Activated CD4-positive, alpha-beta T cell treated with anti-CD3 and anti-CD28 coated beads for 36 hours (primary cell): ENCODE measurements at regions of chr9 and their contacts with region 1.

Region 1: GRCh38 chr9:120892748-120893610 is 16.0 kb upstream of the PHF19 start:
- DNase-seq: peak; percentile 78
- ATAC-seq: peak; percentile 46
- H3K4me3 Mint-ChIP-seq: peak overlapping the region; percentile 67
- H3K27ac Mint-ChIP-seq: peak overlapping the region; percentile 100
- H3K4me1 Mint-ChIP-seq: peaks cover 89% of the 10 kb centered on the region
- H3K27me3 Mint-ChIP-seq: no peaks in the 10 kb centered on the region

Region 2: DNA sequence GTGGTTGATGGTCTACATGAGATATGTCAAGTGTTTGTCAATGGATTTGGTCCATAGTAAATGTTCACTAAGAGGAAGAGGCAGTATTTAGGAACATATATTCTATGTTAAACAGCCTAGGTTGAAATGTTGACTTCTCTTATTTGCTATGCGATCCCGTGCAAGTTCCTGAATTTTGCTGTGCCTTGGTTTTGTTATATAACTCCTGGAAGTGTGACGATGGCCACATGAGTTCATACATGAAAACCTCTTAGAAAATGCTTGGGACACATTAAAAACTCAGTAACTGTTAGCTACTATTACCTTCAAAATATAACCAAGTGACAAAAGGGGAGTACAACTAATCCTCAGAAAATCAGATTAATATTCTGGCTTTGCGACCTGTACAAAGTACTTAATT is 77.9 kb before region 1 on chr9:
- CTCF ChIA-PET with region 1: no interaction called
- POLR2A ChIA-PET with region 1: no interaction called
- intact Hi-C with region 1: no loop called
- DNase-seq: no peak
- ATAC-seq: no peak
- H3K4me3 Mint-ChIP-seq: no peak overlapping the region
- H3K27ac Mint-ChIP-seq: no peak overlapping the region
- H3K4me1 Mint-ChIP-seq: peaks cover 6% of the 10 kb centered on the region
- H3K27me3 Mint-ChIP-seq: no peaks in the 10 kb centered on the region

Region 3: DNA sequence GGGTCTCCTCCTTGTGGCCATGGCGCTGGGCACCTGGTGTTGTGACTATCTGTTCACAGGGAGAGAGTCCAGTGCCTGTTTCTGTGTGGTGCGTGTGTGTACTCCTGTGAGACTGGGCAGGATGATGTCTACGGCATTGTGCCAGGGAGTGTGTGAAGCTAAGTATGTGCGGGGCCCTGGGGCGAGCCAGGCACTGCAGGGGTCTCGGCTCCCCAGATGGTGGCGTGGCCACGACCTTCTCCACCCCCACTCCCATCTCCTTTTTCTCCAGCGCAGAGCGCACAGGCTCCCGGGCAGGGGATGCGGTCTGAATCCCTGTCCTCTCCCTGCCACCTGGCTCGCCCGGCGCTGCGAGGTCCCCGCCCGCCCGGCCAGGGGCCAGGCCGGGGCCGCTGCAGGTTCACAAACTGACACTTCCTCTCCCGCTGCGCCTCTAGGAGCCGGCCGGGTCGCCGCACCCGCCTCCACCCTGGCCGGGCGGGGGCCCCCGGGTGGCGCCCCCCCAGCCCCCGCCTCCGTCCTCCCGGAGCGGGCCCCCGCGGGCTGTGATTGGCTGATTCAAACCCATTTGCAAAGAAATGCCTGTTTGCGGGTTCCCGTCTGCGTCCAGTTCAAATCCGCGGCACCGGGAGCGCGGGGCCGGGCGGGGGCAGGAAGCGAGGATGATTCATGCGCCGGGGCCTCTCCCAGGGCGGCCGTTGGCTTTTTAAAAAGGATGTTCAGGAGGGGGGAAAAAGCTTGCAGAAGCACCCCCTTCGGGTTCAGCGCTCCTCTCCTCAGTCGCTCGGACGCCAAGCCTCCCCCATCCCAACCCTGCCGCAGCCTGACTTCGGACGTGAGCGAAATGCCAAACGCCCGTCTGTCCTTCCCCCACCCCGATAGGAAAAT is 16.8 kb before region 1 on chr9:
- CTCF ChIA-PET with region 1: interaction called, 6 read pairs
- POLR2A ChIA-PET with region 1: interaction called, 21 read pairs
- intact Hi-C with region 1: loop called (anchors 1 kb)
- DNase-seq: peak; percentile 95
- ATAC-seq: peak; percentile 59
- H3K4me3 Mint-ChIP-seq: peak overlapping the region; percentile 85
- H3K27ac Mint-ChIP-seq: peak overlapping the region; percentile 94
- H3K4me1 Mint-ChIP-seq: peaks cover 73% of the 10 kb centered on the region
- H3K27me3 Mint-ChIP-seq: no peaks in the 10 kb centered on the region

Region 4: DNA sequence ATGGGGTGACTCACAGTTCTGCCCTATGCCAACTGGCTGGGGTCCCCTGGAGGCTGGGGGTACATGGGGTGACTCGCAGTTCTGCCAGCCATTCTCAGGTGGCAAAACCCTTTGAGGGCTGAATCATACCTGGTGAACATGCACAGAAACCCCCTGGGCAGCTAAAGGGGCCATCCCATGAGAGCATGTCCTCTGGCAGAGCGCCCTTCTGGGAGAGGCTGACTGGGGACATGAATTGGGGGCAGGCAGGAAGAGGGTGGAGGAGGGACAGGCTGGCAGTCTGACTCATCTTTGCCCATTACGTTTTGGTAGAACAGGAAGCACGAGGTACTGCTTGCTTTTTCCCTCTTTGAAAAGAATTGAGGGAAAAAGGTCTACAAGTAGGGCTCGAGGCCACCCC is 16.9 kb after region 1 on chr9:
- CTCF ChIA-PET with region 1: interaction called, 9 read pairs
- POLR2A ChIA-PET with region 1: interaction called, 3 read pairs
- intact Hi-C with region 1: loop called (anchors 1 to 2 kb)
- DNase-seq: peak; percentile 77
- ATAC-seq: peak; percentile 63
- H3K4me3 Mint-ChIP-seq: no peak overlapping the region
- H3K27ac Mint-ChIP-seq: peak overlapping the region; percentile 92
- H3K4me1 Mint-ChIP-seq: peaks cover 94% of the 10 kb centered on the region
- H3K27me3 Mint-ChIP-seq: no peaks in the 10 kb centered on the region